Heart right ventricle (tissue), 16 donors: ENCODE measurements at regions of chr12 and their contacts with region 1.

Region 1: GRCh38 chr12:64696080-64696741 is 63.0 kb downstream of the GNS start:
- DNase-seq: no peak
- ATAC-seq: peak in 3 of 8 donors; percentile 27 to 56 (median 33)
- H3K4me3 ChIP-seq: no peak overlapping the region
- H3K27ac ChIP-seq: peak overlapping the region in 3 of 10 donors; percentile 36 to 43 (median 41)
- H3K4me1 ChIP-seq: peaks cover 5 to 51% (median 12%) of the 10 kb centered on the region in 9 donors
- H3K27me3 ChIP-seq: no peaks in the 10 kb centered on the region
- CTCF ChIP-seq: peak in 7 of 9 donors; percentile 35 to 66 (median 49)

Region 2: GRCh38 chr12:64451687-64452558 is 244.3 kb before region 1 on chr12 and contains the start of gene TBK1:
- intact Hi-C with region 1: loop called in 1 of 10 experiments (anchors 10 kb)
- DNase-seq: peak; percentile 84 to 93
- ATAC-seq: peak; percentile 95 to 99 (median 97)
- H3K4me3 ChIP-seq: peak within 1 kb of the TSS; percentile 75 to 98 (median 92)
- H3K27ac ChIP-seq: peak within 1 kb of the TSS; percentile 92 to 98 (median 96)
- H3K4me1 ChIP-seq: peaks cover 0 to 46% (median 26%) of the 10 kb centered on the region in 9 donors
- H3K27me3 ChIP-seq: no peaks in the 10 kb centered on the region
- CTCF ChIP-seq: peak in 3 of 9 donors; percentile 16 to 45 (median 35)
- total RNA-seq, gene TBK1: 9.0 to 15.1 (median 10.5) TPM

Region 3: GRCh38 chr12:64494998-64495729 is 201.0 kb before region 1 on chr12:
- intact Hi-C with region 1: no loop called
- DNase-seq: no peak
- ATAC-seq: no peak
- H3K4me3 ChIP-seq: no peak overlapping the region
- H3K27ac ChIP-seq: no peak overlapping the region
- H3K4me1 ChIP-seq: peaks cover 0 to 8% (median 0%) of the 10 kb centered on the region in 9 donors
- H3K27me3 ChIP-seq: no peaks in the 10 kb centered on the region
- CTCF ChIP-seq: no peak

Region 4: DNA sequence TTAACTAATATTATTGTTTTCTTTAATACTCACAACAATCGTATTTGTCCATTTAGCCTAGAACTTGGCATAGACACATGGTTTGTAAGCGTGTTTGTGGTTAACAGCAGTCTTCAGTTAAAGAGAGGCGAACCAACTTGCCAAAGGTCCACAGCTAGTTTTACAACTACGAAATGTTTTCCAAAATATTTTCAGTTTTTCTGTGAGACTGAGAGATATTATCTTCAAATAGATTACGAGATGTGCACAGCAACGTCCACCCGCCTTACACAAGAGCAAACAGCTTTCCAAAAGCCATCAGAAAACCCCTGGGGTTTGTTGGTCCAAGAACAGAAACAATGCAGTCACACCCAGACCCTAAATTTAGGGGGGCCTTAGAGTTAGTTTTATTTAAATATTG is 144.5 kb before region 1 on chr12:
- intact Hi-C with region 1: loop called (anchors 1 to 5 kb)
- DNase-seq: no peak
- ATAC-seq: no peak
- H3K4me3 ChIP-seq: no peak overlapping the region
- H3K27ac ChIP-seq: peak overlapping the region in 3 of 10 donors; percentile 2 to 19 (median 10)
- H3K4me1 ChIP-seq: peaks cover 0 to 24% (median 6%) of the 10 kb centered on the region in 9 donors
- H3K27me3 ChIP-seq: no peaks in the 10 kb centered on the region
- CTCF ChIP-seq: no peak

Region 5: GRCh38 chr12:64566732-64567399 is 129.3 kb before region 1 on chr12:
- intact Hi-C with region 1: loop called in 1 of 10 experiments (anchors 5 kb)
- DNase-seq: no peak
- ATAC-seq: no peak
- H3K4me3 ChIP-seq: no peak overlapping the region
- H3K27ac ChIP-seq: no peak overlapping the region
- H3K4me1 ChIP-seq: peaks cover 2 to 42% (median 36%) of the 10 kb centered on the region in 9 donors
- H3K27me3 ChIP-seq: no peaks in the 10 kb centered on the region
- CTCF ChIP-seq: no peak

Region 6: DNA sequence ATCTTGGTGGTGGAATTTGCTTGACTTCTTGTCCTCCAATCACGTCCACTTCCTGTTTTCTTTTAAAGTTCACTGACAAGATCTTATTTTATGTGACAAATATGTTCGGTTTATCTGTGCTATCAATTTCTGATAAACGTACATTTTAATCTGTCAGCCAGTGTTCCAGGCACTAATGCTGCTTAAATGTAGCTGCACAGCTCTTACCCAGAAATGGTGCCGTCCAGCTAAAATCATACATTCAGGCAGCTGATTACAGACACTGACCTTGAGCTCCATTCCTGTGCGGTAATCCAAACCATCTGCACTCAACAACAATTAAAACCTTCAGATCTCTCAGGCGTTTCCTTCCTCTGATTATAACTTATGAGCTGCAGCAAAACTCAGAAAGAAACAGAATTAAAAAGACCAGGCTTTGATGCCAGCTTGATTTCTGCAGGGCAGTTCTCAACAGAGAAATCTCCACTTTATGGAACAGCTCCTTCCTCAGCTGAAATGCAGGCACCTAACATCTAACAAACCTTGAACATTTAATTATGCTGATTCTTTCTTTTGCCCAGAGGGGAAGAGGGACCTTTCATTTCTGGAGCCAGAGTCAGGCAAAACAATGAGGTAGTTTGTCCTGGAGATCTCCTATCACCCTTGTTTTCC is 112.3 kb before region 1 on chr12:
- intact Hi-C with region 1: no loop called
- DNase-seq: no peak
- ATAC-seq: peak in 7 of 8 donors; percentile 49 to 79 (median 58)
- H3K4me3 ChIP-seq: peak overlapping the region in 5 of 10 donors; percentile 11 to 35 (median 26)
- H3K27ac ChIP-seq: peak overlapping the region in 7 of 10 donors; percentile 1 to 84 (median 67)
- H3K4me1 ChIP-seq: peaks cover 3 to 31% (median 25%) of the 10 kb centered on the region in 9 donors
- H3K27me3 ChIP-seq: no peaks in the 10 kb centered on the region
- CTCF ChIP-seq: no peak